ENCODE measurements at regions of chr5 and their contacts with region 1.

Region 1: DNA sequence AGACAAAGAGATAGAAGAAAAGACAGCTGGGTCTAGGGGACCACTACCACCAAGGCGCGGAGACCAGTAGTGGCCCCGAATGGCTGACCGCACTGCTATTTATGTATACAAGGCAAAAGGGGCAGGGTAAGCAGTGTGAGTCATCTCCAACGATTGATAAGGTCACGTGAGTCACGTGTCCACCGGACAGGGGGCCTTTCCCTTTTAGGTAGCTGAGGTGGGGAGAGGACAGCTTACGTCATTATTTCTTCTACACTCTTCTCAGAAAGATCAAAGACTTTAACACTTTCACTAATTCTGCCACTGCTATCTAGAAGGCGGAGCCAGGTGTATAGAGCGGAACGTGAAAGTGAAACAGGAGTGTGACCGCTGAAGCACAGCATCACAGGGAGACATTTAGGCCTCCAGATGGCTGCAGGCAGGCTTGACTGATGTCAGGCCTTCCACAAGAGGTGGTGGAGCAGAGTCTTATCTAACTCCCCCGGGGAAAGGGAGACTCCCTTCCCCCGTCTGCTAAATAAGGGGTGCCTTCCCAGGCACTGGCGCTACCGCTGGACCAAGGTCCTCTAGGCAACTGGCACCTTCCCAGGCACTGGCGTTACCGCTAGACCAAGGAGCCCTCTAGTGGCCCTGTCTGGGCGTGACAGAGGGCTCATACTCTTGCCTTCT is 6.1 kb upstream of the PRR16 start:
- DNase-seq: peak; percentile 88 to 92
- ATAC-seq: peak; percentile 71
- H3K4me3 ChIP-seq: no peak overlapping the region
- H3K27ac ChIP-seq: peak overlapping the region in 1 of 2 donors; percentile 32
- H3K4me1 ChIP-seq: no peaks in the 10 kb centered on the region
- H3K27me3 ChIP-seq: no peaks in the 10 kb centered on the region

Region 2: GRCh38 chr5:119943148-119943547 is 514.8 kb before region 1 on chr5:
- intact Hi-C with region 1: loop called (anchors 5 to 10 kb)
- DNase-seq: no peak
- ATAC-seq: no peak
- H3K4me3 ChIP-seq: no peak overlapping the region
- H3K27ac ChIP-seq: no peak overlapping the region
- H3K4me1 ChIP-seq: no peaks in the 10 kb centered on the region
- H3K27me3 ChIP-seq: no peaks in the 10 kb centered on the region

Region 3: GRCh38 chr5:120055858-120056257 is 402.1 kb before region 1 on chr5:
- intact Hi-C with region 1: loop called (anchors 5 kb)
- DNase-seq: no peak
- ATAC-seq: peak; percentile 64
- H3K4me3 ChIP-seq: no peak overlapping the region
- H3K27ac ChIP-seq: peak overlapping the region in 1 of 2 donors; percentile 28
- H3K4me1 ChIP-seq: no peaks in the 10 kb centered on the region
- H3K27me3 ChIP-seq: no peaks in the 10 kb centered on the region

Region 4: GRCh38 chr5:120062515-120063048 is 395.4 kb before region 1 on chr5:
- intact Hi-C with region 1: loop called (anchors 5 kb)
- DNase-seq: no peak
- ATAC-seq: no peak
- H3K4me3 ChIP-seq: no peak overlapping the region
- H3K27ac ChIP-seq: no peak overlapping the region
- H3K4me1 ChIP-seq: peaks cover 2 to 6% of the 10 kb centered on the region in 2 donors
- H3K27me3 ChIP-seq: no peaks in the 10 kb centered on the region

Region 5: DNA sequence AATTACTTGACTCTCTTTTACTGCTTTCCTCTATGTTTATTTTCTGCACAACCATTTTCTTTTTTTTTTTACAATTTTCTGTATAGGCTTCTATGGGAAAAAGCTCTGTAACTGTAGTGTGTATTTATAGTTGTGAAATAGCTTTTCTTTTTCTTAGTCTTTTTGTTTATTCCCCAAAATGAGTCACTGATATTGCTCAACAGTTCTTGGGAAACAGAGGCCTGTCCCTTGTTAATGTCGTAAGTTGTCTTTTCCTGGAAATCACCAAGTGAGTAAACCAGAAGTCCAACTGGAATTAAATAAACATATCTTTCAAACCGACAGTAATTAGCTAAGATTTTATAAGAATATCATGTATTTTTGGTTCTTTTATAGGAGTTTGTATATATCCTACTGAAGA is 318.9 kb before region 1 on chr5:
- intact Hi-C with region 1: loop called in 1 of 2 experiments (anchors 10 kb)
- DNase-seq: no peak
- ATAC-seq: peak; percentile 83
- H3K4me3 ChIP-seq: no peak overlapping the region
- H3K27ac ChIP-seq: no peak overlapping the region
- H3K4me1 ChIP-seq: peaks cover 0 to 4% of the 10 kb centered on the region in 2 donors
- H3K27me3 ChIP-seq: no peaks in the 10 kb centered on the region

Region 6: DNA sequence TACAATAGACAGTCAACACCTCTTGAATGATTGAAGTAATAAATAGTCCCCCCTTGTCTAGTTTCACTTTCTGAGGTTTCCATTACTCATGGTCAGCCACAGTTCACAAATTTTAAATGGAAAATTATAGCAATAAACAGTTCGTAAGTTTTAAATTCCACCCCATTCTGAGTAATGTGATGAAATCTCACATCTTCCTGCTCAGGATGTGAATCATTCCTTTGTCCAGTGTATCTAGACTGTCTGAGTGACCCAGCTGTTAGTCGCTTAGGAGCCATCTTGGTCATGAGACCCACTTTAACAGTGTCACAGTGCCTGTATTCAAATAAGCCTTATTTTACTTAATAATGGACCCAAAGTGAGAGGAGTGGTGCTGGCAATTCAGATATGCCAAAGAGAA is 305.5 kb before region 1 on chr5:
- intact Hi-C with region 1: loop called in 1 of 2 experiments (anchors 10 kb)
- DNase-seq: no peak
- ATAC-seq: no peak
- H3K4me3 ChIP-seq: no peak overlapping the region
- H3K27ac ChIP-seq: no peak overlapping the region
- H3K4me1 ChIP-seq: no peaks in the 10 kb centered on the region
- H3K27me3 ChIP-seq: no peaks in the 10 kb centered on the region

Region 7: GRCh38 chr5:120388016-120388781 is 69.8 kb before region 1 on chr5:
- intact Hi-C with region 1: loop called in 1 of 2 experiments (anchors 5 kb)
- DNase-seq: no peak
- ATAC-seq: peak; percentile 81
- H3K4me3 ChIP-seq: no peak overlapping the region
- H3K27ac ChIP-seq: peak overlapping the region; percentile 51 to 77
- H3K4me1 ChIP-seq: peaks cover 0 to 3% of the 10 kb centered on the region in 2 donors
- H3K27me3 ChIP-seq: no peaks in the 10 kb centered on the region

Region 8: DNA sequence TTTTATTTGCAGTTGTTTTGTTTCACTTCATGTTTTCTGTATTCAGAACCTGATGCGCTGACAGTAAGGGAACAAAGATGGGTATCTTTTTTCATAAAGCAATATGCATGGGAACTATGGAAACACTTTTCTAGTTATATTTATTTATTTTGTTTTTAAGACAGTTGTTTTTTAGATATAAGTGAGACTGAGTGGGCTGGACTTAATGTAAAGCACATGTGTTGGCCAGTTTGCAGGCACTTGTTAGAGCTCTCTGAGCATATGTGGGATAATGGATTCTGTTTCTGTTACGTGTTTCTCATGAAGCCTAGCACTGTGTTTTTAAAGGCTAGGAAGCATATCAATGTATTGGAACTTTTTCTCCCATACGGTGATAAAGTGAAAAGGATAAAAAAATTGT is 170.2 kb after region 1 on chr5:
- intact Hi-C with region 1: no loop called
- DNase-seq: no peak
- ATAC-seq: no peak
- H3K4me3 ChIP-seq: no peak overlapping the region
- H3K27ac ChIP-seq: no peak overlapping the region
- H3K4me1 ChIP-seq: no peaks in the 10 kb centered on the region
- H3K27me3 ChIP-seq: no peaks in the 10 kb centered on the region

Region 9: GRCh38 chr5:121019106-121019505 is 561.1 kb after region 1 on chr5:
- intact Hi-C with region 1: no loop called
- DNase-seq: no peak
- ATAC-seq: no peak
- H3K4me3 ChIP-seq: no peak overlapping the region
- H3K27ac ChIP-seq: no peak overlapping the region
- H3K4me1 ChIP-seq: no peaks in the 10 kb centered on the region
- H3K27me3 ChIP-seq: no peaks in the 10 kb centered on the region

Measured in aorta (tissue), 5 donors.